ENCODE measurements at regions of chrX and their contacts with region 1.

Region 1: GRCh38 chrX:154515878-154516655 is at the start of gene FAM3A:
- DNase-seq: peak; percentile 90
- H3K4me3 ChIP-seq: peak within 1 kb of the TSS; percentile 59 to 74 (median 62)
- H3K27ac ChIP-seq: peak within 1 kb of the TSS; percentile 62
- H3K4me1 ChIP-seq: peaks cover 12% of the 10 kb centered on the region
- H3K27me3 ChIP-seq: no peaks in the 10 kb centered on the region
- CTCF ChIP-seq: no peak
- POLR2A ChIP-seq: peak; percentile 71
- total RNA-seq, gene FAM3A: 25.6 and 42.9 TPM in 2 replicates

Region 2: GRCh38 chrX:154428176-154429010 is 87.7 kb before region 1 on chrX and contains the start of gene ATP6AP1:
- CTCF ChIA-PET with region 1: no interaction called
- POLR2A ChIA-PET with region 1: no interaction called
- dilution Hi-C with region 1: no loop called
- intact Hi-C with region 1: loop called (anchors 5 kb)
- DNase-seq: peak; percentile 93
- H3K4me3 ChIP-seq: peak within 1 kb of the TSS; percentile 44 to 78 (median 73)
- H3K27ac ChIP-seq: peak within 1 kb of the TSS; percentile 43
- H3K4me1 ChIP-seq: peaks cover 28% of the 10 kb centered on the region
- H3K27me3 ChIP-seq: no peaks in the 10 kb centered on the region
- CTCF ChIP-seq: no peak
- POLR2A ChIP-seq: peak; percentile 51
- total RNA-seq, gene ATP6AP1: 136 and 145 TPM in 2 replicates

Region 3: DNA sequence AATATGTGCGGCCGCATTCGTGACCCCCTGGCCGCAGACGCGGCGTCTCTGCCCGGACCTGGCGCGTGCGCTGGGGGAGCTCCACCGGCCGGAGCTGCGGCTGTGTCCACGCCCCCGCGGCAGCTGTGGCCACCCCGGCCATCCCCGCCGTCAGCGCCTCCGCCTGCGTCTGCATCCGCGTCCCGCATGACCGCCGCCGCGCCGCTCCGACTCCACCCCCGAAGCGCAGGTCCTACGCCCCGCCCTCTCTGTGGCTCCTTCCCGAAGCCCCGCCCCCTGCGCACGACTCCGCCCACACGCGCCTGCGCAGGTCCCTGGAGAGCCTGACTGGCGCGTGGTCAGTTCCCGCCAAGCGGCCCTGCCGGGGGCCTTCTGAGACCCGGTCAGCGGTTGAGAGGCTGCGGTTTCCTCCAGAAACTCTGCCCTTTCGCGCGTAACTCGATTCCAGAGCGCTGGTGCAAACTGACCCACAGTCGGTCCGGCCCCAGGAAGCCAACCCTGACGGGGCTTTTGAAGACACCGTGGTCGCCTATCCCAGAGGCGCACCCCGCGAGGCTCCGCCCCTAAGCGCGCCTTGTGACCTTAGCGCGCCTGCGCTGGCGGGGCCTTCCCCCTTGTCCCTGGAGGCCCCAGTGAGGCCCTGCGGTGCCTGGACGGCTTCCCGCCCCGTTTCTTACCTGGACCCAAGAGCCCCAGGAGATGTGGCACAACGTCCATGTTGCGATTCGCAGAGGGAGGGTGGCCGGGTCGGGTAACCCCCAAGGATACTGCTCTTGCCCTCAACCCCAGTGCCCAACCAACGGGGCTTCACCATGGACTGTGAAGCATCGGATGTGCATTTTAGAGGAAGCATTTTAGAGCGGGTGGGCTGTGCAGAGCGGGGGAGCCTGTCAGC is 37.1 kb before region 1 on chrX and contains the start of gene LAGE3:
- CTCF ChIA-PET with region 1: no interaction called
- POLR2A ChIA-PET with region 1: no interaction called
- dilution Hi-C with region 1: no loop called
- intact Hi-C with region 1: loop called (anchors 2 kb)
- DNase-seq: peak; percentile 92
- H3K4me3 ChIP-seq: peak within 1 kb of the TSS; percentile 39 to 56 (median 48)
- H3K27ac ChIP-seq: peak within 1 kb of the TSS; percentile 41
- H3K4me1 ChIP-seq: peaks cover 9% of the 10 kb centered on the region
- H3K27me3 ChIP-seq: no peaks in the 10 kb centered on the region
- CTCF ChIP-seq: no peak
- POLR2A ChIP-seq: peak; percentile 25
- total RNA-seq, gene LAGE3: 14.3 and 17.8 TPM in 2 replicates

Region 4: DNA sequence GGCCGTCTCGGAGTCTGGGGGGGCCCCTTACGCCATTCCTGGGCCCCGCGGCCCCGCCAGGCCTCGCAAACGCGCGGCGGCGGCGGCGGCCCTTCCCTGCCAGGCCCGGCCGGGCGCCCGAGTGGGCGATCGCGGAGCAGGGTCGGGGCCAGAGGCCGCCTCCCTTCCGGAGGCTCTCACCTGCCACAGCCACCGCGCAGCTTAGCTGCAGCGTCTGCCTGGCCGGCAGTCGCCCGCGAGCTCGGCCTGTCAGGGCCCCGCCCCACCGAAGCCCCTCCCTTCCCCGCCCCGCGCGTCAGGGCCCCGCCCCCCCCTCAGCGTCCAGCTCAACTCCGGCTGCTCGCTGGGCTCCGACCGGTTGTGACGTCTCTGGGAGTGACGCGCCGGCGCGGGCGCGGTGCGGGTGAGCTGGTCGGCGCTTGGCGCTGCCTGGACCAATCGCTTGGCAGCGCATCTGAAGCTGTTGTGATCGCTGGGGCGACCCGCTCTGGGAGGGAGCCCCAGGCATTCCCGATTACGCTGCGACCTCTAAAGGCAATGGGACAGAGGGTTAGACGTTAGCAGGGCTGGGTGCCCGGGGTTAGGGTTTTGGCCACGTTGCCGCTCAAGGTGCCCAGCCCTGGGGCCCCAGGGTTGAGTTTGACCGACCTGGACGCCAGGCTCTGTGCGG is 25.5 kb before region 1 on chrX and contains the start of gene SLC10A3:
- CTCF ChIA-PET with region 1: no interaction called
- POLR2A ChIA-PET with region 1: interaction called, 3 read pairs
- dilution Hi-C with region 1: no loop called
- intact Hi-C with region 1: loop called (anchors 1 kb)
- DNase-seq: peak; percentile 94
- H3K4me3 ChIP-seq: peak within 1 kb of the TSS; percentile 51 to 68 (median 55)
- H3K27ac ChIP-seq: peak within 1 kb of the TSS; percentile 78
- H3K4me1 ChIP-seq: no peaks in the 10 kb centered on the region
- H3K27me3 ChIP-seq: no peaks in the 10 kb centered on the region
- CTCF ChIP-seq: no peak
- POLR2A ChIP-seq: peak; percentile 80
- total RNA-seq, gene SLC10A3: 19.7 and 22.6 TPM in 2 replicates

Region 5: GRCh38 chrX:154526901-154527675 is 11.0 kb after region 1 on chrX:
- CTCF ChIA-PET with region 1: interaction called, 15 read pairs
- POLR2A ChIA-PET with region 1: interaction called, 6 read pairs
- dilution Hi-C with region 1: no loop called
- intact Hi-C with region 1: no loop called
- DNase-seq: peak; percentile 71
- H3K4me3 ChIP-seq: peak overlapping the region in 1 of 3 experiments; percentile 22
- H3K27ac ChIP-seq: peak overlapping the region; percentile 22
- H3K4me1 ChIP-seq: peaks cover 4% of the 10 kb centered on the region
- H3K27me3 ChIP-seq: no peaks in the 10 kb centered on the region
- CTCF ChIP-seq: peak; percentile 37 to 43
- POLR2A ChIP-seq: no peak

Measured in endothelial cell of umbilical vein (primary cell).